Caco-2 (cell line): ENCODE measurements at regions of chr19 and their contacts with region 1.

Region 1: GRCh38 chr19:45178262-45179071 is at the start of gene BLOC1S3:
- DNase-seq: peak; percentile 100
- H3K4me3 ChIP-seq: peak within 1 kb of the TSS; percentile 77
- H3K4me3 Mint-ChIP-seq: peak within 1 kb of the TSS; percentile 85
- H3K27ac Mint-ChIP-seq: peak within 1 kb of the TSS; percentile 88
- H3K4me1 ChIP-seq: no peaks in the 10 kb centered on the region
- H3K4me1 Mint-ChIP-seq: peaks cover 11% of the 10 kb centered on the region
- H3K27me3 ChIP-seq: no peaks in the 10 kb centered on the region
- H3K27me3 Mint-ChIP-seq: no peaks in the 10 kb centered on the region
- CTCF ChIP-seq: peak; percentile 45 to 56
- total RNA-seq, gene BLOC1S3: 20.1 and 20.4 TPM in 2 replicates

Region 2: GRCh38 chr19:45092747-45093678 is 85.5 kb before region 1 on chr19 and contains the start of gene PPP1R37:
- CTCF ChIA-PET with region 1: interaction called, 3 read pairs
- POLR2A ChIA-PET with region 1: interaction called, 19 read pairs
- intact Hi-C with region 1: loop called (anchors 1 kb)
- DNase-seq: peak; percentile 96 to 97
- H3K4me3 ChIP-seq: peak within 1 kb of the TSS; percentile 93
- H3K4me3 Mint-ChIP-seq: peak within 1 kb of the TSS; percentile 84
- H3K27ac Mint-ChIP-seq: peak within 1 kb of the TSS; percentile 96
- H3K4me1 ChIP-seq: peaks cover 10% of the 10 kb centered on the region; the same call in 1 of the 2 replicates
- H3K4me1 Mint-ChIP-seq: peaks cover 31% of the 10 kb centered on the region
- H3K27me3 ChIP-seq: no peaks in the 10 kb centered on the region
- H3K27me3 Mint-ChIP-seq: no peaks in the 10 kb centered on the region
- CTCF ChIP-seq: no peak
- total RNA-seq, gene PPP1R37: 42.1 and 47.7 TPM in 2 replicates

Region 3: DNA sequence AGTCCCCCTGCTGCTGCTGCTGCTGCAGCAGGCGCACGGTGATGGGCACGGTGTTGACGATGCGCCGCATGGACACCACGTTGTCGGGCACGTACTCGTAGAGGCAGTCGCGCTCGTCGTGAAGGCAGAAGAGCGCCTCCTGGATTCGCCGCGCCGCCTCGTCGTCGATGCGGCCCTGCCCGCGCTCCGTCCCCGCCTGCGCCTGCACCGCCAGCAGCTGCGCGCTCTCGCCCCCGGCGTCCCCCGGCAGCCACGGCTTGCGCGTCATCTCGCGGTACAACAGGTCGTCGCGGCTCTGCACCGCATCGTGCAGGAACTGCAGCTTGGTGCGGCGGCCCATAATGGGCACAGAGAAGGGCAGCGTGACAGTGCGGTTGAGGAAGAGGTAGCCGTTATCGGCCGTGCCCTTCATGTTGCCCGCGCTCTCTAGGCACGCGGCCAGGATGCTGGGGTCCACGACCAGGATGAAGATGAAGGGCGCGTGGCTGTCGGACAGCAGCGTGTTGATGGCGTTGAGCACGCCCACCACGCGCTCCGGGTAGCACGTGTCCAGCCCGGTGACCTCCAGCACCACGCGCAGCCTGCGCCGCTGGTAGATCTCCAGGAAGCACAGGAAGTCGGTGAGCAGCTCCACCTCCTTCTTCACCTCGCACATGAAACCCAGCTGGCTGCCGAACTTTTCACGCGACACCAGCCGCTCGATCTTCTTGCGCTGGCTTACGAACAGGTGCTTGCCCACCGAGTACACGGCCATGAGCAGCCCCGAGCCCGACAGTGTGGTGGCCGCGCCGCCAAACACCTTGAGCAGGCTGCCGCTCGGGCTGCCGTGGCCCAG is 25.7 kb before region 1 on chr19:
- CTCF ChIA-PET with region 1: interaction called, 17 read pairs
- POLR2A ChIA-PET with region 1: interaction called, 16 read pairs
- intact Hi-C with region 1: loop called (anchors 1 kb)
- DNase-seq: peak; percentile 78 to 84
- H3K4me3 ChIP-seq: peak overlapping the region; percentile 67
- H3K4me3 Mint-ChIP-seq: peak overlapping the region; percentile 74
- H3K27ac Mint-ChIP-seq: peak overlapping the region; percentile 64
- H3K4me1 ChIP-seq: peaks cover 16% of the 10 kb centered on the region
- H3K4me1 Mint-ChIP-seq: peaks cover 11% of the 10 kb centered on the region
- H3K27me3 ChIP-seq: no peaks in the 10 kb centered on the region
- H3K27me3 Mint-ChIP-seq: no peaks in the 10 kb centered on the region
- CTCF ChIP-seq: no peak

Region 4: GRCh38 chr19:45164577-45165335 is 13.7 kb before region 1 on chr19:
- CTCF ChIA-PET with region 1: interaction called, 12 read pairs
- POLR2A ChIA-PET with region 1: interaction called, 8 read pairs
- intact Hi-C with region 1: loop called (anchors 2 kb)
- DNase-seq: peak in 1 of 2 experiments; percentile 41
- H3K4me3 ChIP-seq: no peak overlapping the region
- H3K4me3 Mint-ChIP-seq: no peak overlapping the region
- H3K27ac Mint-ChIP-seq: no peak overlapping the region
- H3K4me1 ChIP-seq: peaks cover 19% of the 10 kb centered on the region
- H3K4me1 Mint-ChIP-seq: peaks cover 23% of the 10 kb centered on the region
- H3K27me3 ChIP-seq: no peaks in the 10 kb centered on the region
- H3K27me3 Mint-ChIP-seq: no peaks in the 10 kb centered on the region
- CTCF ChIP-seq: no peak

Region 5: GRCh38 chr19:45250832-45251451 is 72.5 kb after region 1 on chr19 and contains the start of gene MARK4:
- CTCF ChIA-PET with region 1: interaction called, 11 read pairs
- POLR2A ChIA-PET with region 1: no interaction called
- intact Hi-C with region 1: no loop called
- DNase-seq: peak in 1 of 2 experiments; percentile 63
- H3K4me3 ChIP-seq: peak within 1 kb of the TSS; percentile 83
- H3K4me3 Mint-ChIP-seq: peak within 1 kb of the TSS; percentile 84
- H3K27ac Mint-ChIP-seq: peak within 1 kb of the TSS; percentile 58
- H3K4me1 ChIP-seq: peaks cover 3% of the 10 kb centered on the region; the same call in 1 of the 2 replicates
- H3K4me1 Mint-ChIP-seq: peaks cover 7% of the 10 kb centered on the region
- H3K27me3 ChIP-seq: no peaks in the 10 kb centered on the region
- H3K27me3 Mint-ChIP-seq: no peaks in the 10 kb centered on the region
- CTCF ChIP-seq: no peak
- total RNA-seq, gene MARK4: 30.3 and 33.4 TPM in 2 replicates

Region 6: GRCh38 chr19:45340232-45340898 is 161.9 kb after region 1 on chr19 and contains the start of gene KLC3:
- CTCF ChIA-PET with region 1: interaction called, 6 read pairs
- POLR2A ChIA-PET with region 1: no interaction called
- intact Hi-C with region 1: loop called (anchors 2 kb)
- DNase-seq: peak; percentile 68 to 84
- H3K4me3 ChIP-seq: peak within 1 kb of the TSS; percentile 66
- H3K4me3 Mint-ChIP-seq: no peak within 1 kb of the TSS
- H3K27ac Mint-ChIP-seq: no peak within 1 kb of the TSS
- H3K4me1 ChIP-seq: peaks cover 5% of the 10 kb centered on the region; the same call in 1 of the 2 replicates
- H3K4me1 Mint-ChIP-seq: peaks cover 6% of the 10 kb centered on the region
- H3K27me3 ChIP-seq: no peaks in the 10 kb centered on the region
- H3K27me3 Mint-ChIP-seq: no peaks in the 10 kb centered on the region
- CTCF ChIP-seq: no peak
- total RNA-seq, gene KLC3: 7.1 and 10.2 TPM in 2 replicates